Endothelial cell of umbilical vein (primary cell): ENCODE measurements at regions of chr7 and their contacts with region 1.

Region 1: DNA sequence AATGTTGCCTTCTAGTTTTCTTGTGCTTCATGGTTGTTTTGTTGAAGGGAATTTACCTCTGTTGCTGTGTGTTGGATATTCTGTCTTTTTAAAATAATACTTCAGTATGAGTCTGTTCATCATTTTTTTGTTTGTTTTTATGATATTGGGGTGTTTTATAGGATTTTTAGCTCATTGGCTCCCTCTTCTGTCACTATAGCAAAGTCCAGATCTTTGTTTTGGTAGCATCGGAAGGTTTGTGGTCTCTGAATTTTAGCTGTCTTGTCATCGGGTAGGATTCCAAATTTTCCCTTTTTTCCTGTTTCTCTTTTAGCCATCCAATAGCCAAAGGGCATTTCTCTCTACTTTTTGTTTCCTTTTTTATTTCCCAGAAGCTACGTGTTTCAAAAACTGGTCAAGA is 91.4 kb downstream of the EXOC4 start:
- DNase-seq: peak; percentile 42
- H3K4me3 ChIP-seq: no peak overlapping the region
- H3K27ac ChIP-seq: no peak overlapping the region
- H3K4me1 ChIP-seq: no peaks in the 10 kb centered on the region
- H3K27me3 ChIP-seq: no peaks in the 10 kb centered on the region
- CTCF ChIP-seq: peak; percentile 28 to 34
- POLR2A ChIP-seq: no peak

Region 2: GRCh38 chr7:131688738-131689661 is 1655.3 kb before region 1 on chr7:
- CTCF ChIA-PET with region 1: interaction called, 16 read pairs
- POLR2A ChIA-PET with region 1: no interaction called
- dilution Hi-C with region 1: no loop called
- intact Hi-C with region 1: no loop called
- DNase-seq: peak; percentile 61
- H3K4me3 ChIP-seq: no peak overlapping the region
- H3K27ac ChIP-seq: no peak overlapping the region
- H3K4me1 ChIP-seq: no peaks in the 10 kb centered on the region
- H3K27me3 ChIP-seq: peaks cover 0 to 2% of the 10 kb centered on the region in 2 experiments
- CTCF ChIP-seq: peak; percentile 89 to 94
- POLR2A ChIP-seq: no peak

Region 3: DNA sequence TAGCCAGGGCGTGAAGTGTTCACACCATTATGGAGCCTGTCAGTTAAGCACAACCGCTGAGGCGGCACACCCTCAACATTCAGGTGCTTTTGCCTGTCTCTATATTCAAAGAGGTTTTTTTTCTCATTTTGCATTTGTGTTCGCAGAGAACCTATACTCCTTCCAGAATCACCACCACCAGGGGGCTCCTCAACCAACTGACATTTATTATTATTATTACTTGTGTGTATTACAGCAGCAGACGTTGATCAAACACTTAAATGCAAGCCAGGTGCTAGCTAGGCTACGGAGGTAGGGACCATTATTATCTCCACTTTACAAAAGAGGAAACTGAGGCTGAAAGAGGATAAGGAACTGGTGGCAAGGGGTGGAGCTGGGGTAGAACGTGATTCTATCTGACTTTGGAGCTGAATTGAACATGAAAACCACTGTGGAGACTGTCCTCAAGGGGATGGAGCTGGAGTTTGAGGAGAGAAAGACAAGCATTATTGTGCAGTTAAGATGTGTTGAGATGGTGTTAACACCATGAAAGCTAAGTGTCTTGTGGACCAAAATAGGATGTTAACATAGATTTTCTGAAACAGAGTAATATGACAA is 634.2 kb before region 1 on chr7:
- CTCF ChIA-PET with region 1: interaction called, 60 read pairs
- POLR2A ChIA-PET with region 1: no interaction called
- dilution Hi-C with region 1: no loop called
- intact Hi-C with region 1: no loop called
- DNase-seq: peak; percentile 59
- H3K4me3 ChIP-seq: no peak overlapping the region
- H3K27ac ChIP-seq: no peak overlapping the region
- H3K4me1 ChIP-seq: no peaks in the 10 kb centered on the region
- H3K27me3 ChIP-seq: peaks cover 0 to 2% of the 10 kb centered on the region in 2 experiments
- CTCF ChIP-seq: peak; percentile 53
- POLR2A ChIP-seq: no peak

Region 4: DNA sequence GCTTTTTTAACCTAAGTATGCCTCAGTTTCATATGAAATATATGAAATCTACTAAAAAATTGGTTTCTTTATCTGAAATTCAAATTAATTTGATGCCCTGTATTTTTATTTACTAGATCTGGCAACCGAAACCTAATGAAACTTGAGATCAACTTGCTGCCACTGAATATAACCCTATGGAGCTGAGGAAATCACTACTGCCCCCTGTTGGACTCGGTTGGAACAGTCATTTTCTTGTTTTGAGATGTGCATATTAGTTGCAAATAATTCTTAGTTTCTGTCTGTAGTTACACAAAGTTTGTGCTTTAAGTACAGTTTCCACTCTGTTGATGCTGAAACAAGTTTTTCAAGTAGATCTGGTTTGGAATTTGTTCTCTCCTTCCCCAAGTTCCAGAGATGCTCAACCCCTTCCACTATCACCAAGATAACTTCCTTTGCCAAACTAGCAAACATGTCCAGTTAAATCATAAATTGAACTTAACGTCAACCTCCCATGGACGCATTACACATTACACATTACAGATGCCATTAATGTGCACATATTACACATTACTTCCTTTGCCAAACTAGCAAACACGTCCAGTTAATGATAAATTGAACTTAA is 113.6 kb before region 1 on chr7:
- CTCF ChIA-PET with region 1: interaction called, 5 read pairs
- POLR2A ChIA-PET with region 1: no interaction called
- dilution Hi-C with region 1: no loop called
- intact Hi-C with region 1: loop called (anchors 2 kb)
- DNase-seq: peak; percentile 73
- H3K4me3 ChIP-seq: no peak overlapping the region
- H3K27ac ChIP-seq: no peak overlapping the region
- H3K4me1 ChIP-seq: peaks cover 9% of the 10 kb centered on the region
- H3K27me3 ChIP-seq: peaks cover 21 to 36% of the 10 kb centered on the region in 2 experiments
- CTCF ChIP-seq: peak; percentile 60 to 62
- POLR2A ChIP-seq: no peak

Region 5: DNA sequence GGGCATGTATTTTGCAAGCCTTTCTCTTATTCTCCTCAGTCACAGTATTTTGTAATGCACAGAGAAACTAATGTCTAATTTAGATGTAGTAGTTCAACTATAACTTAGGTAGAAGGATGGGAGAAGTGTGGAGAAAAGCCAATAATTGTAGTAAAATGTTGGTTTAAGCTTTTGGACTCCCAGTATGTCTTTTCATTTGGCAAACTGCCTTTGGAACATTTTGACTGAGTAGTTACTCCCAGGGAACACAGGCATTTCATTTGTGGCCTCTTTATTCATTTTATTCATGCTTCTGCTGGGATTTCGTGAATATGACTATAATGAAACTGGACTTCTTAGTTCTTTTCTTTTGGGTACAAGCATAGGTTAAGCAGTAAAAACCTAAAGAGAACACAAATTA is 12.4 kb before region 1 on chr7:
- CTCF ChIA-PET with region 1: interaction called, 12 read pairs
- POLR2A ChIA-PET with region 1: no interaction called
- dilution Hi-C with region 1: no loop called
- intact Hi-C with region 1: no loop called
- DNase-seq: no peak
- H3K4me3 ChIP-seq: no peak overlapping the region
- H3K27ac ChIP-seq: no peak overlapping the region
- H3K4me1 ChIP-seq: no peaks in the 10 kb centered on the region
- H3K27me3 ChIP-seq: no peaks in the 10 kb centered on the region
- CTCF ChIP-seq: no peak
- POLR2A ChIP-seq: no peak

Region 6: GRCh38 chr7:133355325-133355708 is 11.0 kb after region 1 on chr7:
- CTCF ChIA-PET with region 1: interaction called, 14 read pairs
- POLR2A ChIA-PET with region 1: no interaction called
- dilution Hi-C with region 1: no loop called
- intact Hi-C with region 1: no loop called
- DNase-seq: peak; percentile 79
- H3K4me3 ChIP-seq: no peak overlapping the region
- H3K27ac ChIP-seq: peak overlapping the region; percentile 25
- H3K4me1 ChIP-seq: peaks cover 13% of the 10 kb centered on the region
- H3K27me3 ChIP-seq: no peaks in the 10 kb centered on the region
- CTCF ChIP-seq: no peak
- POLR2A ChIP-seq: no peak

Region 7: GRCh38 chr7:133386205-133386604 is 41.9 kb after region 1 on chr7:
- CTCF ChIA-PET with region 1: no interaction called
- POLR2A ChIA-PET with region 1: no interaction called
- dilution Hi-C with region 1: no loop called
- intact Hi-C with region 1: no loop called
- DNase-seq: no peak
- H3K4me3 ChIP-seq: no peak overlapping the region
- H3K27ac ChIP-seq: no peak overlapping the region
- H3K4me1 ChIP-seq: no peaks in the 10 kb centered on the region
- H3K27me3 ChIP-seq: no peaks in the 10 kb centered on the region
- CTCF ChIP-seq: no peak
- POLR2A ChIP-seq: no peak

Region 8: DNA sequence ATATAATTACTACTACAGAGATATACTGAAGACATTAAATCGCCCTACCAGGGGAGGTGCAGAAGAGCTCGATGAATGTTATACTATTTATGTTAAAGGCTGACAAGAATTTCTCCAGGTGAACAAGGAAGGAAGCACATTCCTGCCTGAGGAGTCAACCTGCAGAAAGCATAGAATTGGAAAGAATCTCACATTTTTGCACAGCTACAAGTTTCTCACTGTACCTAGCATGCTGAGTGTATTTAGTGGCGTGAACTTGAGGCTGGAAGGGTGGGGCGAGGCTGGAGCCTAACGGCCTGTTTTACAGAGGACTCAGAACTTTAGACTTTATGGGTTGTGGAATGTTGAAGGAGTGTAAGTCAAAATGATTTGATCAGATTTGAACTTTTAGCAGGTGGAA is 409.2 kb after region 1 on chr7:
- CTCF ChIA-PET with region 1: no interaction called
- POLR2A ChIA-PET with region 1: no interaction called
- dilution Hi-C with region 1: no loop called
- intact Hi-C with region 1: no loop called
- DNase-seq: no peak
- H3K4me3 ChIP-seq: no peak overlapping the region
- H3K27ac ChIP-seq: no peak overlapping the region
- H3K4me1 ChIP-seq: no peaks in the 10 kb centered on the region
- H3K27me3 ChIP-seq: no peaks in the 10 kb centered on the region
- CTCF ChIP-seq: no peak
- POLR2A ChIP-seq: no peak